ENCODE measurements at regions of chrX and their contacts with region 1.

Region 1: DNA sequence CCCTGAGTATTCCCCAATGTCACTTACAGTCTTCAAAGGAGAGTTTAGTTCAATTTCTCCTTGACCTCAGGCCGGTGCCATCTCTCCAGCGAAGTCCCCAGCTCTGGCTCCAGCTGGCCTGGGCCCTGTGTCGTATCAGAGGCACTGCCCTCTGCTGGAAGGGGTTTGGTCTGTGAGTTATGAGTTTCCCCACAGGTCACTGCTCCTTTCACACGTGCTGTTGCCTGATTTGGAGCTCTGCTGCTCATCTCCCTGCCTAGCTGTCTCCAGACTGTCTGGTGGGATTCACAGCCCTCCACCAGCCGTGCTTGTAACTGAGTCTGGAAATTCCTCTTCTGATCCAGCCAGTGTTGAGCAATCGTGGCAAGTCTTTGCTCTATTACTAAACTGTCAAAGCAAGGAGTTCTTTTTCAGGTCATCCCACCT is at the start of gene RAP2C:
- DNase-seq: peak; percentile 20 to 81 (median 56)
- ATAC-seq: no peak
- H3K4me3 ChIP-seq: peak within 1 kb of the TSS; percentile 81 to 85
- H3K4me3 Mint-ChIP-seq: peak within 1 kb of the TSS; percentile 97
- H3K27ac ChIP-seq: peak within 1 kb of the TSS; percentile 92 to 97
- H3K27ac Mint-ChIP-seq: peak within 1 kb of the TSS; percentile 95
- H3K4me1 ChIP-seq: peaks cover 20% of the 10 kb centered on the region
- H3K4me1 Mint-ChIP-seq: peaks cover 25% of the 10 kb centered on the region
- H3K27me3 ChIP-seq: no peaks in the 10 kb centered on the region
- H3K27me3 Mint-ChIP-seq: no peaks in the 10 kb centered on the region
- CTCF ChIP-seq: no peak
- total RNA-seq, gene RAP2C: 61.0 to 64.9 TPM

Region 2: GRCh38 chrX:131841496-131842410 is 377.6 kb before region 1 on chrX:
- CTCF ChIA-PET with region 1: interaction called, 15 read pairs
- POLR2A ChIA-PET with region 1: interaction called, 4 read pairs
- intact Hi-C with region 1: loop called (anchors 1 to 5 kb)
- DNase-seq: peak in 5 of 9 experiments; percentile 13 to 68 (median 55)
- ATAC-seq: peak; percentile 46
- H3K4me3 ChIP-seq: no peak overlapping the region
- H3K4me3 Mint-ChIP-seq: no peak overlapping the region
- H3K27ac ChIP-seq: no peak overlapping the region
- H3K27ac Mint-ChIP-seq: no peak overlapping the region
- H3K4me1 ChIP-seq: no peaks in the 10 kb centered on the region
- H3K4me1 Mint-ChIP-seq: no peaks in the 10 kb centered on the region
- H3K27me3 ChIP-seq: no peaks in the 10 kb centered on the region
- H3K27me3 Mint-ChIP-seq: no peaks in the 10 kb centered on the region
- CTCF ChIP-seq: peak; percentile 69

Region 3: GRCh38 chrX:131987252-131987651 is 232.1 kb before region 1 on chrX:
- CTCF ChIA-PET with region 1: no interaction called
- POLR2A ChIA-PET with region 1: no interaction called
- intact Hi-C with region 1: loop called in 1 of 2 experiments (anchors 10 kb)
- DNase-seq: peak in 6 of 9 experiments; percentile 2 to 82 (median 34)
- ATAC-seq: peak; percentile 96
- H3K4me3 ChIP-seq: peak overlapping the region in 1 of 2 experiments; percentile 21
- H3K4me3 Mint-ChIP-seq: peak overlapping the region; percentile 45
- H3K27ac ChIP-seq: peak overlapping the region; percentile 54 to 87
- H3K27ac Mint-ChIP-seq: peak overlapping the region; percentile 97
- H3K4me1 ChIP-seq: peaks cover 56% of the 10 kb centered on the region
- H3K4me1 Mint-ChIP-seq: peaks cover 62% of the 10 kb centered on the region
- H3K27me3 ChIP-seq: no peaks in the 10 kb centered on the region
- H3K27me3 Mint-ChIP-seq: no peaks in the 10 kb centered on the region
- CTCF ChIP-seq: no peak

Region 4: GRCh38 chrX:132092439-132093065 is 126.8 kb before region 1 on chrX:
- CTCF ChIA-PET with region 1: interaction called, 15 read pairs
- POLR2A ChIA-PET with region 1: no interaction called
- intact Hi-C with region 1: loop called (anchors 1 to 2 kb)
- DNase-seq: peak; percentile 8 to 73 (median 47)
- ATAC-seq: peak; percentile 93
- H3K4me3 ChIP-seq: no peak overlapping the region
- H3K4me3 Mint-ChIP-seq: no peak overlapping the region
- H3K27ac ChIP-seq: no peak overlapping the region
- H3K27ac Mint-ChIP-seq: no peak overlapping the region
- H3K4me1 ChIP-seq: no peaks in the 10 kb centered on the region
- H3K4me1 Mint-ChIP-seq: peaks cover 9% of the 10 kb centered on the region
- H3K27me3 ChIP-seq: no peaks in the 10 kb centered on the region
- H3K27me3 Mint-ChIP-seq: peaks cover 3% of the 10 kb centered on the region
- CTCF ChIP-seq: peak; percentile 58

Region 5: GRCh38 chrX:132716006-132716405 is 496.6 kb after region 1 on chrX:
- CTCF ChIA-PET with region 1: no interaction called
- POLR2A ChIA-PET with region 1: no interaction called
- intact Hi-C with region 1: no loop called
- DNase-seq: no peak
- ATAC-seq: no peak
- H3K4me3 ChIP-seq: no peak overlapping the region
- H3K4me3 Mint-ChIP-seq: no peak overlapping the region
- H3K27ac ChIP-seq: no peak overlapping the region
- H3K27ac Mint-ChIP-seq: no peak overlapping the region
- H3K4me1 ChIP-seq: no peaks in the 10 kb centered on the region
- H3K4me1 Mint-ChIP-seq: peaks cover 2% of the 10 kb centered on the region
- H3K27me3 ChIP-seq: no peaks in the 10 kb centered on the region
- H3K27me3 Mint-ChIP-seq: no peaks in the 10 kb centered on the region
- CTCF ChIP-seq: no peak

Measured in CD8-positive, alpha-beta T cell (primary cell).